Activated T-helper 1 cell treated with anti-CD3 and anti-CD28 coated beads, Interleukin-12 subunit alpha, Interleukin-12 subunit beta, Interleukin-2, Interleukin-4 antibody, amounts not matched to agents 30 ng/mL and 10 ng/mL and 1 ng/mL, durations not matched to agents 14 hours and 24 hours and 36 hours (primary cell): ENCODE measurements at regions of chr19 and their contacts with region 1.

Region 1: DNA sequence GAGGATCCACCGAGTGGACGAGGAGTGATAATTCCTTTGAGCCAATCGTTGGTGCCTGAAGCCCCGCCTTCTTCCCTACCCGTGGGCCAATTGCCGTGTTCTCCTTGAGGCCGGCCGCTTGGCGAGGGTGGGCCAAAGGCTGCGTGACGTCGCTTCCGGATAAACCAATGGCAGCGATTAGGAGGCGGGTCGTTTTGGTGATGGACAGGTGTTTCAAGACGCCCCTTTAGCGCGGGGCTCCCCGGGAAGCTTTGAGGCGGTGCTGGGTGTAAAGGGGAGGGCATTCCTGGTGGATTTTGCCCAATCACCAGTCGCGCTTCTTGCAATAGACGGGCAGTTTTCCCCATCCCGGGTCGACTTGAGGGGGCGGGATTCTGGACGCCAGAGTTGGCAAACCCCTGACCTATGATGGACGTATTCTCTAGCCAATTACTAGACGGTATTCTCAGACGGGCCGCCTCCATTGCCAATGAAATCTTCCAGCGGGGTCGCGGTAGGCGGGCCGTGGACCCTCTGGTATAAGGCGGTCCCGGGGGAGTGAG is 310 bp upstream of the PRMT1 start:
- DNase-seq: peak; percentile 98
- H3K4me3 Mint-ChIP-seq: peak overlapping the region; percentile 95
- H3K27ac Mint-ChIP-seq: peak overlapping the region; percentile 99
- H3K4me1 Mint-ChIP-seq: peaks cover 41% of the 10 kb centered on the region
- H3K27me3 Mint-ChIP-seq: no peaks in the 10 kb centered on the region

Region 2: GRCh38 chr19:49451430-49452181 is 225.2 kb before region 1 on chr19 and contains the start of gene PIH1D1:
- intact Hi-C with region 1: loop called (anchors 2 kb)
- DNase-seq: peak; percentile 94
- H3K4me3 Mint-ChIP-seq: peak within 1 kb of the TSS; percentile 96
- H3K27ac Mint-ChIP-seq: peak within 1 kb of the TSS; percentile 99
- H3K4me1 Mint-ChIP-seq: peaks cover 55% of the 10 kb centered on the region
- H3K27me3 Mint-ChIP-seq: no peaks in the 10 kb centered on the region
- total RNA-seq, gene PIH1D1: 124 and 126 TPM in 2 replicates

Region 3: DNA sequence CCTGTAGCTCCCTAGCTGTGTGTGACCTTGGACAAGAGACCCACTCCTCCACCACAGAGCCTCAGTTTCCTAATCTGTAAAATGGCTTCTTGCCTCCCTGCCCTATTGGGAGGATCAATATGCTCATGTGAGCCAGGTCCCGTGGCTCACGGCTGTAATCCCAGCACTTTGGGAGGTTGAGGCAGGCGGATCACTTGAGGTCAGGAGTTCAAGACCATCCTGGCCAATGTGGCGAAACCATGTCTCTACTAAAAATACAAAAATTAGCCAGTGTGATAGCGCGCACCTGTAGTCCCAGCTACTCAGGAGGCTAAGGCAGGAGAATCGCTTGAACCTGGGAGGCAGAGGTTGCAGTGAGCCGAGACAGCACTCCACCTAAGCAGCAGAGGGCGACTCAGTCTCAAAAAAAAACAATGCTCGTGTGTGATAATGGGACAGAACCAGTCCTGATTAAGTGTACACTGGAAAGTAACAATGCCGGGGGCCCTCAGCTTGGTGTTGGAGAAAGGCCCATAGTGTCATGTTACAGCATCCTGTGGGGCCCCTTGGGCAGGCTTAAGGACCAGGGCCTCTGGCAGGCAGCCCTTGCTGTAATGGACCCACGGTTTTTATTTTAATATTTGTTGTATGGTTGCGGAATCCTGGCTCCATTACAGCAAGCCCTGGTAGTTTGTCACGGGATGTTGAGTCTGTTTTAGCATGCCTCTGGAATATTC is 173.7 kb before region 1 on chr19:
- intact Hi-C with region 1: loop called (anchors 1 kb)
- DNase-seq: peak; percentile 56
- H3K4me3 Mint-ChIP-seq: no peak overlapping the region
- H3K27ac Mint-ChIP-seq: no peak overlapping the region
- H3K4me1 Mint-ChIP-seq: peaks cover 54% of the 10 kb centered on the region
- H3K27me3 Mint-ChIP-seq: no peaks in the 10 kb centered on the region

Region 4: GRCh38 chr19:49580264-49581006 is 96.3 kb before region 1 on chr19 and contains the start of gene NOSIP:
- intact Hi-C with region 1: loop called (anchors 1 kb)
- DNase-seq: peak; percentile 94
- H3K4me3 Mint-ChIP-seq: peak within 1 kb of the TSS; percentile 93
- H3K27ac Mint-ChIP-seq: peak within 1 kb of the TSS; percentile 86
- H3K4me1 Mint-ChIP-seq: peaks cover 30% of the 10 kb centered on the region
- H3K27me3 Mint-ChIP-seq: no peaks in the 10 kb centered on the region
- total RNA-seq, gene NOSIP: 72.1 and 77.5 TPM in 2 replicates

Region 5: DNA sequence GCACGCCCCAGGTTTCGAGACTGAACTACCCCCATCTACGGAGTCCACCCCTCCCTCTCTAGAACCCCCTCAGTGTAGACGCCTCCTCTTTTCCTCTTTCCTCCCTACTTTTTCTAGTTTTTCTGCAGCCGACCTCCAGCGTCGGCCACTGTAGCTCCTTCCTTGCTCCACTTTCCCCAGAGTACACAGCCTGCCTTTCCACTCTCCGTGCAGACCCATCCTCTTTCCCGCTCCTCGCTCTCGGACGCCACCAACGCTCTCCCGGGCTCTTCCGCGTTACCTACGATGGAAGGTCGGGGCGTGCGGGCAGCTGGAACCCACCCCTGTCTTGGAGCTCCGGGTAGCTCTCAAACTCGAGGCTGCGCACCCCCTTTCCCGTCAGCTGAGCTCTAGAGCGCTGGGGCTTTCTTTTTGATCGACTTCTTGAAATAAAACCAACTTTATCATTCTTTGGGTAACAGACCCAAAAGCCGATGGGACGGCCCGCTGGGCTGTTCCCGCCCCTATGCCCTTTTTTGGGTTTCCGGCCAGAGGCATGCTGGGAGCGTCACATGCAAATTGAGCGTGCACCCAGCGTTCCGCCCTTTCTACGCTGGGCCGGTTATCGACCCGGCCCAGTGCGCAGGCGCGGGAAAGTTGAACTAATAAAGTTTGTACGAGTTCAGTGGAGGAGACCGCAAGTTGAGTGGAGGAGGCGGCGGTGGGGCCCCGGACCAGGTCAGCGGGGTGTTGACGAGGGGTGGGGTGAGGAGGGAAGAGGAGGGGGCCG is 11.2 kb before region 1 on chr19 and contains the starts of genes BCL2L12 and IRF3:
- intact Hi-C with region 1: loop called (anchors 1 kb)
- DNase-seq: peak; percentile 98
- H3K4me3 Mint-ChIP-seq: peak within 1 kb of the TSS; percentile 98
- H3K27ac Mint-ChIP-seq: peak within 1 kb of the TSS; percentile 93
- H3K4me1 Mint-ChIP-seq: peaks cover 32% of the 10 kb centered on the region
- H3K27me3 Mint-ChIP-seq: no peaks in the 10 kb centered on the region
- total RNA-seq, gene BCL2L12: 72.2 and 73.7 TPM in 2 replicates
- total RNA-seq, gene IRF3: 149 and 156 TPM in 2 replicates

Region 6: GRCh38 chr19:49817964-49818648 is 141.3 kb after region 1 on chr19 and contains the start of gene MED25:
- intact Hi-C with region 1: loop called (anchors 2 kb)
- DNase-seq: peak; percentile 88
- H3K4me3 Mint-ChIP-seq: peak within 1 kb of the TSS; percentile 94
- H3K27ac Mint-ChIP-seq: peak within 1 kb of the TSS; percentile 93
- H3K4me1 Mint-ChIP-seq: peaks cover 25% of the 10 kb centered on the region
- H3K27me3 Mint-ChIP-seq: no peaks in the 10 kb centered on the region
- total RNA-seq, gene MED25: 54.2 and 54.5 TPM in 2 replicates

Region 7: DNA sequence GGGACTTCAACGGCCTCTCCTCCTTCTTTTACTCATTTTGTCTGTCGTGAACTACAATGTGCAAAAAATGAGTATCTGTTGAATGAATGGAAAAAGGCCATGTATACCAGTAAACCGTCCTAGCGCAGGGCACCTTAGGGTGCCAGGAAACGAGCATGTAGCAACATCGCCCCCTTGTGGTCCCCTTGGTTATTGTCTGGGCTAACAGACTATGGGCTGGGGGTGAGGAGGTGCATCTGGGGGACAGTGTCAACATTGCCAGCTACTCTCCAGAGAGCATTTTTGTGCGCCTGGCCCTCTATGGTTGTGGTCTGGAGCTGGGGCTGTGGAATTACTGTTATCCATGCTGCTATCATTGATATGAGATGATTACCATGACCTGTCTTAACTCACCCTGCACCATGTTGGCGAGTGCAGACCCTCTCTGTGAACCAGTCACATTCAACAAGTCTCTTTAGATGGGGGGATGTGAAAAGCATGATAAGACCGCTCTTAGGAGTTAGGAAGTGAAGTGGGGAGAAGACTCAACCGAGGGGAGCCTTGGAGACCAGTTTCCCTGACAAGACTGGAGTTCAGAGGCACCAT is 307.0 kb after region 1 on chr19:
- intact Hi-C with region 1: loop called (anchors 5 kb)
- DNase-seq: peak; percentile 61
- H3K4me3 Mint-ChIP-seq: no peak overlapping the region
- H3K27ac Mint-ChIP-seq: no peak overlapping the region
- H3K4me1 Mint-ChIP-seq: peaks cover 13% of the 10 kb centered on the region
- H3K27me3 Mint-ChIP-seq: no peaks in the 10 kb centered on the region